ENCODE measurements at regions of chr9 and their contacts with region 1.

Region 1: GRCh38 chr9:135343837-135344522 is 135.6 kb upstream of the PPP1R26 start:
- DNase-seq: peak; percentile 70
- H3K4me3 ChIP-seq: no peak overlapping the region
- H3K27ac ChIP-seq: no peak overlapping the region
- H3K4me1 ChIP-seq: peaks cover 0 to 4% (median 0%) of the 10 kb centered on the region in 4 donors
- H3K27me3 ChIP-seq: peaks cover 0 to 67% (median 45%) of the 10 kb centered on the region in 3 donors
- CTCF ChIP-seq: peak in 3 of 4 experiments; percentile 61 to 82 (median 79)
- EP300 ChIP-seq: no peak
- POLR2A ChIP-seq: no peak

Region 2: GRCh38 chr9:135085830-135086546 is 258.0 kb before region 1 on chr9:
- intact Hi-C with region 1: loop called (anchors 1 kb)
- DNase-seq: peak; percentile 89
- H3K4me3 ChIP-seq: peak overlapping the region in 3 of 4 donors; percentile 18 to 51 (median 50)
- H3K27ac ChIP-seq: peak overlapping the region in 1 of 4 donors; percentile 24
- H3K4me1 ChIP-seq: peaks cover 0 to 35% (median 31%) of the 10 kb centered on the region in 4 donors
- H3K27me3 ChIP-seq: peaks cover 22 to 46% (median 28%) of the 10 kb centered on the region in 3 donors
- CTCF ChIP-seq: peak; percentile 86 to 95 (median 93)
- EP300 ChIP-seq: no peak
- POLR2A ChIP-seq: no peak

Region 3: DNA sequence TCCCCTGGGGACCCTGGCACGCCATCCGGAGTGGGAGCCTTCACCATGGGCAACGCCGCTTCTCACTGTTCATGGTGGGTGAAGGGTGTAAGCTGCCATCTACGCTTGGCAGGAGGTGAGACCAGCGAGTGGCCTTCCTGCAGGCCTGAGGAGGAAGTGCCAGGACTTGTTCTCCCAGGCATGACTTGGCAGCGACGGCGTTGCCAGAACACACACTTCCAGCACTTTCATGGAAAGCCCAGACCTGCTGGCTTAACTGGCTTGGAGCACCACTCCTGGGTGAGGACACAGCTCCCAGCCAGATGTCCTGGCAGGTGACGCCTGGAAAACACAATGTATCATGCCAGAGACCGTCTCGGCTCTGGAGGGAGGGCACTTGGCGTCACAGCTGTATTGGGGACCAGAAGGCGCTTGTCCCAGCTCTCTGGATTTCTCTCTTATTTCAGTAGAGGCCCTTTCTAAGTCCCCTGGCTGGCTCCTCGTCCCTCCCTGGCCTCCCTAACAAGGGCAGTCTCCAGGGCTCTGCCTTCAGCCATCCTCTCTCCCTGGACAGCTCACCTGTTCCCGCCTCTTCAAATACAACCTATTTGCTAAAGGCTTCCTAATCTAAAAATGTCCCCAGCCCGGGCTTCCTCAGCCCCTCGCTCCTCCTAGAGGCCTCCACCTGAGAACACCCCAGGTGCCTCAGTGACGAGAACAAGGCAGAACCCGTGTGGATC is 68.2 kb before region 1 on chr9:
- intact Hi-C with region 1: no loop called
- DNase-seq: no peak
- H3K4me3 ChIP-seq: no peak overlapping the region
- H3K27ac ChIP-seq: no peak overlapping the region
- H3K4me1 ChIP-seq: no peaks in the 10 kb centered on the region
- H3K27me3 ChIP-seq: peaks cover 4 to 89% (median 14%) of the 10 kb centered on the region in 3 donors
- CTCF ChIP-seq: no peak
- EP300 ChIP-seq: no peak
- POLR2A ChIP-seq: no peak